ENCODE measurements at regions of chr6 and their contacts with region 1.

Region 1: GRCh38 chr6:4210629-4211423 is 75.5 kb upstream of the ECI2 start:
- DNase-seq: peak; percentile 68
- ATAC-seq: peak; percentile 100
- H3K4me3 ChIP-seq: no peak overlapping the region
- H3K27ac ChIP-seq: no peak overlapping the region
- H3K4me1 ChIP-seq: no peaks in the 10 kb centered on the region
- H3K27me3 ChIP-seq: peaks cover 3% of the 10 kb centered on the region
- CTCF ChIP-seq: peak; percentile 77
- POLR2A ChIP-seq: no peak
- RAD21 ChIP-seq: peak; percentile 78

Region 2: DNA sequence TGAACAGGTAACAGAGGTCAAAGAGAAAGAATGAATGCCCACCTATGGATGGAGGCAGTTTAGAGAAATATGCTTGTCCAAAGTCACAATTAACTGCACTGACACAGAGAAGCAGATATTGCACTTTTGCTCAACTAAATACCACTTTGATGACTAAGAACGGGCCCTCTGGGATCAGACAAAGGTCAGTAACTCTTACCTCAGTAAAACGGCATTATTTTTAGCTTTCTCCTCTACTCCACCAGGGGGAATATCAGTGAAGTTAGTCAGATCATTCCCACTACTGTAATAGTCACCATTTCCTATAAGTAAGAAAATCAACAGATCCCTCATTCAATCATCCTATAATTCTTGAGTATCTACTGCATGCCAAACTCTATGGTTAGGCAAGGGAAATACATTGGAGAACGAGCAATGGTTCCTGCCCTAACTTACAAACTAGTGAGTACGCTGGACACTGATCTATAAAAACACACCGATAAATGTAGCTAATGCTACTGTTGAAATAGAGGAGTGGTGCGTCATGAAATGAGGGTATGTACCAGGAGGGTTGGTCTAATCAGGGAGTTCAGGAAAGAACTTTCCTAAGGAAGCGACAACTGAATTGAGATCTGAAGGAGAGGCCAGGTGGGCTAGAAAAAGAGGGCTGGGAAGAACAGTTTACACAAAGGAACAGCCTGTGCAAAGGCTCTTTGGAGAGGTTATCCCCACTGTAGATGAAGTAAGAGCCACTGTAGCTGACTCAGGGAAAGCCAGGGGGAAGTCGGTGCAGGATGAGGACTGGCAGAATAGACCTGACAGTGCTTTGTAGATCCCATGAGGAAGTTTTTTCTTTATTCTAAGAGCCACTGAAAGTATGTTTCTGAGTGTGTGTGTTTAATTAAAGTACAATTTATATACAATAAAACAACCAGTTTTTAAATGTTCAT is 84.6 kb before region 1 on chr6:
- CTCF ChIA-PET with region 1: interaction called, 9 read pairs
- POLR2A ChIA-PET with region 1: no interaction called
- dilution Hi-C with region 1: no loop called
- in situ Hi-C with region 1: no loop called
- intact Hi-C with region 1: loop called (anchors 1 kb)
- DNase-seq: peak; percentile 90
- ATAC-seq: peak; percentile 98
- H3K4me3 ChIP-seq: no peak overlapping the region
- H3K27ac ChIP-seq: peak overlapping the region; percentile 25; the same call in 1 of the 2 replicates
- H3K4me1 ChIP-seq: peaks cover 13% of the 10 kb centered on the region
- H3K27me3 ChIP-seq: no peaks in the 10 kb centered on the region
- CTCF ChIP-seq: peak; percentile 58
- POLR2A ChIP-seq: no peak
- RAD21 ChIP-seq: peak; percentile 47

Region 3: DNA sequence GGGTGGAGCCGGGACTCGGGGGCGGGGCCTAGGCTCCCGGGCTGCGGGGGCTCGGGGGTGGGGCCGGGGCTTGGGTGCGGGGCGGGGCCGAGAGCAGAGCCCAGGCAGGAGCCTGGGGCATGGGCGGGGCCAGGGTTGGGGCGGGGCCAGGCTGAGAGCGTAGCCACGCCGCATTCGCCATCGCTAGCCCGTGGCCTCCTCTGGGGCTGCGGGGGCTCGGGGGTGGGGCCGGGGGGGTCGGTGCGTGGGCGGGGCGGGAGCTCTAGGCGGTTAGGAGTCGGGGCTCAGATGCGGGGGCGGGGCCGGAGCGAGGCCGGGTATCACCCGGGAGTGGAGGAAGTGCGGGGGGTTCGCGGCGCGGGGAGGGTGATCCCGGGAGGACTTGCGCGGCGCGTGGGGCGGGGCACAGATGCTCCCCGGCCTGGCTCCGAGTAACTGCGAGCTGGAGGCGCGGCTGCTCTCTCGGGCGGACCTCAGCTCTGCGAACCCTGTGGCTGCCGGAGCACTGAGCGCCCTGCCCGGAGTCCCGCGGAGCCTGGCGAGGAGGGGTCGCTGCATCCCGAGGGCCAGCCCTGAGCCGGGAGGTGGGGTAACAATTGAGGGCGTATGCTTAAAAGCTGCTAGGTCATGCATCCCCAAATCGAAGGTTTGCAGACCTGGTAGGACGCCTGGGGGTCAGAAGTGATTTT is 75.0 kb before region 1 on chr6:
- CTCF ChIA-PET with region 1: no interaction called
- POLR2A ChIA-PET with region 1: no interaction called
- dilution Hi-C with region 1: no loop called
- in situ Hi-C with region 1: no loop called
- intact Hi-C with region 1: loop called (anchors 1 kb)
- DNase-seq: peak; percentile 90
- ATAC-seq: peak; percentile 95
- H3K4me3 ChIP-seq: peak overlapping the region; percentile 93
- H3K27ac ChIP-seq: peak overlapping the region; percentile 95
- H3K4me1 ChIP-seq: peaks cover 5% of the 10 kb centered on the region
- H3K27me3 ChIP-seq: no peaks in the 10 kb centered on the region
- CTCF ChIP-seq: no peak
- POLR2A ChIP-seq: no peak
- RAD21 ChIP-seq: no peak

Region 4: DNA sequence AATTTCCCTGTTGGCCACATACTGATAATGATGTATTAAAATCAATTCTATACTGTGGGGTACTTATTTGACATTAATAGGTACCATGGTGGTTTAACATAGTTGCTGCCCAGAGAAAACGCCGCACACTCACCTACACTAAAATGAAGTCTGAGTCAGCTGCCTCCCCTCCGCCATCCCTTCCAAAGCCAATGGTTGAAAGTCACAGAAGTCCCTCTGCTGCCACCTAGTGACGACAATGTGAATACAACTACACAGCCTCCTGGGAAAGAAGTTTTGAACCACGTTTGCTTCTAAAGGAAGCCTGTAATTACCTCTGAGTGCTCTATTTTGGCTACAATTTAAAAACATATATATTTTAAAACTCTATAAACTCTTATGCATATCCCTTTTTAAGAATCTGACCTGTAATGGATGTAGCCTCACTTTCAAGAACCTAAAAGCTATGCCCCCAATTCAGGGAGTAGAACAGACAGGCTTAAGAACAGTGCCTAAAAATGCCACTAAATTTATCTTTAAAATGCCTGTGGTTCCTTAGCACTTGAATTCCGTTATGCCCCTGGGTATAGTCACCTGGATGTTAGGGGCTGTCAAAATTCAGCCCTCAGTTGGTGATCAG is 54.9 kb before region 1 on chr6:
- CTCF ChIA-PET with region 1: interaction called, 3 read pairs
- POLR2A ChIA-PET with region 1: no interaction called
- dilution Hi-C with region 1: no loop called
- in situ Hi-C with region 1: no loop called
- intact Hi-C with region 1: loop called (anchors 2 kb)
- DNase-seq: peak; percentile 86
- ATAC-seq: peak; percentile 99
- H3K4me3 ChIP-seq: no peak overlapping the region
- H3K27ac ChIP-seq: no peak overlapping the region
- H3K4me1 ChIP-seq: no peaks in the 10 kb centered on the region
- H3K27me3 ChIP-seq: no peaks in the 10 kb centered on the region
- CTCF ChIP-seq: peak; percentile 87
- POLR2A ChIP-seq: no peak
- RAD21 ChIP-seq: peak; percentile 89